ENCODE measurements at regions of chr7 and their contacts with region 1.

Region 1: DNA sequence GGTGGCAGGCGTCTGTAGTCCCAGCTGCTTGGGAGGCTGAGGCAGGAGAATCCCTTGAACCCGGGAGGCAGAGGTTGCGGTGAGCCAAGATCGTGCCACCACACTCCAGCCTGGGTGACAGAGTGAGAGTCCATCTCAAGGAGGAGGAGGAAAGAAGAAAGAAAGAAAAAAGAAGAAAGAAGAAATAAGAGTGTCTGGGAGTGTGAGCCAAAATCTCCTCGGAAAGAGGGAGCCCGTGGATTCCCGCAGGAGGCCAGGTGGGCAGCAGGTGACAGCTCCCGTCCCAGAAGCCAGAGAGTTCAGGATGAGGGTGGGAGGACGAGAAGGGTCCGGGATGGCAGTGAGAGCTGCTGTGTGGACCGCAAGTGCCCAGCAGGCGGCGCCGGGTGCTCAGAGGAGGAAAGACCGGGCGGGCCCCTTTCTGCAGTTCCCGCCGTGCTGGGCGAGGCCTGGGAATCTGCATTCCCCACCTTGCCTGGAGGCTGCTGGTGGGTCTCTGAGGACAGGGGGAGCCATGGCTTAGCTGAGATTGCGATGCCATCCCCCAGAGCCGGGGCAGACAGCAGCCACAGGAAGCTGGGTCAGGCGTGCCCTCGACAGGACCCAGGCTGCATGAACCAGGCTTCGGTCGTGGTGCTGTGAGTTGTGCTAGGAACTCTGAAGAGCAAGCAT is 17.1 kb upstream of the AMZ1 start:
- DNase-seq: peak; percentile 80
- ATAC-seq: peak; percentile 95
- H3K4me3 Mint-ChIP-seq: no peak overlapping the region
- H3K27ac Mint-ChIP-seq: no peak overlapping the region
- H3K4me1 Mint-ChIP-seq: peaks cover 11% of the 10 kb centered on the region
- H3K27me3 Mint-ChIP-seq: peaks cover 43% of the 10 kb centered on the region

Region 2: DNA sequence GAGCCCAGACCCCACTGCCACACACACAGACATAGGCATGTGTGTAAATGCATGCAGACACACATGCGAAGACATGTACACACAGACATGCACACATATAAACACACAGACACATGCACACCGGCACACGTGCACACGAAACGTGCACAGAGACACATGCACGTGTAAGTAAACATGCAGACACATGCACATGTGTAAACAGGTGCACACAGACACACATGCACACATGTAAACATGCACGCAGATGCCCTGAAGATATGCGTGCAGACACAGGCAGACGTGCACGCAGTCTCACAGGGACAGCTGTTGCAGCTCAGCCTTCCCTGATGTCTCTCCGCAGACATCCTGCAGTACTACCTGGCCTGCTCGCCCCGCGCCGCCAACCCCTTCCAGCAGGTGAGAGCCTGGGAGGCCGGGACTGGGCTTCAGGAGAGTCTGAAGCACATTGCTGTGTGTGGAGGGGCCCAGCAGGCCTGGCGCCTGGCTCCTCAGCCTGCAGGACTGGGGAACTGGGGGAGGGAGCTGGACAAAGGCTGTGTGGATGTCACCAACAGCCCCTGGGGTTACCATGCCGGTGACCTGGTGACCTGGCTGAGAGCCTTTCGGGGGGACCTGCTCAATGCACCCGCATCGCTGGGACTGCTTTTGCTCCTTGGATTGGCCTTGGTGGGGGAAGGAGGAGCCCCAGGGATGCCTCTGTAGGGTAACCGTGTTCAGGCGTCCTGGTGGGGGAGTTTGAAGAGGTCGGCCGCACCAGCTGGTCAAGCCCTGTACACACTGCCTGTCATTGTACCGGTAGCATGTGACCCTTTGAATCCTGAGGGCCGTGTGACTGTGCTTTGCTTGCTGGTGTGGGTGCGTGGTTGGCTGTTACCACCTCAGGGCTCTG is 18.8 kb before region 1 on chr7:
- CTCF ChIA-PET with region 1: interaction called, 15 read pairs
- DNase-seq: no peak
- ATAC-seq: no peak
- H3K4me3 Mint-ChIP-seq: no peak overlapping the region
- H3K27ac Mint-ChIP-seq: no peak overlapping the region
- H3K4me1 Mint-ChIP-seq: peaks cover 6% of the 10 kb centered on the region
- H3K27me3 Mint-ChIP-seq: no peaks in the 10 kb centered on the region

Region 3: DNA sequence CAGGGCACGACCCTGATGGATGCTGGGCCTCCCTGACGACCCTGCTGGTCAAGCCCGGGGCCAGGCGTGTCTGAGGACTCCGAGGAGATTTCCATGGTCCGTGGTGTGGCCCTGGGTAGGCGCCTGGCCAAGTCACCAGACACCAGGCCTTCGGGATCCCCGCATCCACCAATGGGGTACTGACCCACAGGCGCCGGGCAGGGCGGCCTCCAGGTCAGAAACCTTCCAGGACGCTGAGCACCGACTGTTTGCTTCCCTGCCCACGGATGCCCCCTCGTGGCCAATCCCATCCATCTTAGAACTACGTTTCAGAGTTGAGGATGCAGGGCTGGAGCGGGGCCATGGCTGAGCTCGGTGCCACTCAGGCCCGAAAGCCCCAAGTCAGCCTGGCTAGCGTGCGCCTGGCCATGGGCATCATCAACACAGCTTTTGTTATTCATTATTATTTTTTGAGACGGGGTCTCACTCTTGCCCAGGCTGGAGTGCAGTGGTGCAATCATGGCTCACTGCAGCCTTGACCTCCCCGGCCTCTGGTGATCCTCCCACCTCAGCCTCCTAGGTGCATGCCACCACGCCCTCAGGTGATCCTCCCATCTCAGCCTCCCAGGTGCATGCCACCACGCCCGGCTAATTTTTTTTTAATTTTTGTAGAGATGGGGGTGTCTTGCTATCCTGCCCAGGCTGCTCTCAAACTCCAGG is 10.1 kb after region 1 on chr7:
- CTCF ChIA-PET with region 1: interaction called, 21 read pairs
- DNase-seq: peak; percentile 64
- ATAC-seq: peak; percentile 60
- H3K4me3 Mint-ChIP-seq: no peak overlapping the region
- H3K27ac Mint-ChIP-seq: no peak overlapping the region
- H3K4me1 Mint-ChIP-seq: no peaks in the 10 kb centered on the region
- H3K27me3 Mint-ChIP-seq: peaks cover 32% of the 10 kb centered on the region

Region 4: GRCh38 chr7:2688409-2689331 is 17.8 kb after region 1 on chr7:
- CTCF ChIA-PET with region 1: interaction called, 25 read pairs
- DNase-seq: no peak
- ATAC-seq: peak; percentile 42
- H3K4me3 Mint-ChIP-seq: peak overlapping the region; percentile 53
- H3K27ac Mint-ChIP-seq: no peak overlapping the region
- H3K4me1 Mint-ChIP-seq: peaks cover 32% of the 10 kb centered on the region
- H3K27me3 Mint-ChIP-seq: peaks cover 72% of the 10 kb centered on the region

Region 5: GRCh38 chr7:2698581-2699288 is 27.9 kb after region 1 on chr7:
- CTCF ChIA-PET with region 1: interaction called, 29 read pairs
- DNase-seq: peak; percentile 96
- ATAC-seq: peak; percentile 90
- H3K4me3 Mint-ChIP-seq: peak overlapping the region; percentile 47
- H3K27ac Mint-ChIP-seq: peak overlapping the region; percentile 82
- H3K4me1 Mint-ChIP-seq: peaks cover 36% of the 10 kb centered on the region
- H3K27me3 Mint-ChIP-seq: peaks cover 39% of the 10 kb centered on the region

Region 6: GRCh38 chr7:2732959-2733584 is 62.2 kb after region 1 on chr7:
- CTCF ChIA-PET with region 1: no interaction called
- DNase-seq: no peak
- ATAC-seq: no peak
- H3K4me3 Mint-ChIP-seq: no peak overlapping the region
- H3K27ac Mint-ChIP-seq: no peak overlapping the region
- H3K4me1 Mint-ChIP-seq: peaks cover 15% of the 10 kb centered on the region
- H3K27me3 Mint-ChIP-seq: no peaks in the 10 kb centered on the region

Region 7: GRCh38 chr7:2807845-2808772 is 137.3 kb after region 1 on chr7:
- CTCF ChIA-PET with region 1: no interaction called
- DNase-seq: no peak
- ATAC-seq: no peak
- H3K4me3 Mint-ChIP-seq: no peak overlapping the region
- H3K27ac Mint-ChIP-seq: no peak overlapping the region
- H3K4me1 Mint-ChIP-seq: no peaks in the 10 kb centered on the region
- H3K27me3 Mint-ChIP-seq: no peaks in the 10 kb centered on the region